ENCODE measurements at regions of chr3 and their contacts with region 1.

Region 1: DNA sequence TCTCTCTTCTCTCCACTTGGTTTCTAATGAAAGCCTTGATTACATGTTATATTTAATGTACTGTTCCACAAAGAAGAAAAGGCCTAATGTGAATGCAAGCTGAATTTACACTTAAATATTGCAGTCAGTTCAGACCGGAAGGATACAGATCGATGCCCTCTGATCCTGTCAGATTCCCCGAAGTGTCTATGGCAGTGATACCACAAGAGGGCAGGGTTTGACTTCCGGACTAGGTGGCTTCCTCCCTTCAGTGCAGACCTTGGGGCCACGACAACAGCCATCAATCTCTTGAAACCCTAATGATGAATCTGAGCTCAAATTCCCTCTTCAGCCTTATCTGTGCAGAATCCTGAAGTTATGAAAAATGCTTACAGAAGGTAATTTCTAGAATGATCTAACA is 29.5 kb downstream of the AGTR1 start:
- DNase-seq: no peak
- ATAC-seq: peak in 2 of 4 donors; percentile 56 to 65
- H3K4me3 ChIP-seq: no peak overlapping the region
- H3K27ac ChIP-seq: no peak overlapping the region
- H3K4me1 ChIP-seq: no peaks in the 10 kb centered on the region
- H3K27me3 ChIP-seq: no peaks in the 10 kb centered on the region
- CTCF ChIP-seq: peak; percentile 23

Region 2: DNA sequence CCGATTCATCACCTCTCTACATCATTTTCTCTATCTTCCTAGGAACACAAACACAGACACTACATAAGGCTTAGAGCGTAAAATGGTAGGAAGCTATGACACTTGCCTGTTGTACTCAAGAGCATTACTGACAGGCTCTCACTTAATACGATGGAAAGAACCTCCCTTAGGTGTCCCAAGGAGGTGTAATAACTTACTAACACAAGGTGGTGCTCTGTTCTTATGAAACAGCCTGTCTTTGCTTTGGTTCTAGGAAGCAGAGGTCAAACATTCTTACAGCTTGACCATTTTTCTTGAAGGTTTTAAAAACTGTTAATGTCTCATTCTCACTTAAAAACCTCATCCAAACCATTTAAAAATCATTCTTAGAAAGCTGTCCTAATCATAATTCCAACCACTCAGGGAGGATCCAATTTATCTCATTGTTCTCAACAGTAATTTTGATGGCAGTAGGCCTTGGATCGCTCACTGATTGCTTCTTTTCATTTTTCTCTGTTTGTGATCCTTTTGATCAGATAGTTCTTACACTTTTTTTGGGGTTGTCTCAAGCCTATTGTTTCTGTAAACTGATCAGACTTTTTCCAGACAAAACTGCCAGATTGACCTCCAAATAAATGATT is 347.4 kb before region 1 on chr3:
- intact Hi-C with region 1: loop called in 1 of 2 experiments (anchors 5 kb)
- DNase-seq: no peak
- ATAC-seq: peak; percentile 42 to 83 (median 60)
- H3K4me3 ChIP-seq: no peak overlapping the region
- H3K27ac ChIP-seq: no peak overlapping the region
- H3K4me1 ChIP-seq: no peaks in the 10 kb centered on the region
- H3K27me3 ChIP-seq: no peaks in the 10 kb centered on the region
- CTCF ChIP-seq: peak; percentile 46

Measured in psoas muscle (tissue), 8 donors.